Activated naive CD4-positive, alpha-beta T cell treated with anti-CD3 and anti-CD28 coated beads for 36 hours (primary cell): ENCODE measurements at regions of chr2 and their contacts with region 1.

Region 1: DNA sequence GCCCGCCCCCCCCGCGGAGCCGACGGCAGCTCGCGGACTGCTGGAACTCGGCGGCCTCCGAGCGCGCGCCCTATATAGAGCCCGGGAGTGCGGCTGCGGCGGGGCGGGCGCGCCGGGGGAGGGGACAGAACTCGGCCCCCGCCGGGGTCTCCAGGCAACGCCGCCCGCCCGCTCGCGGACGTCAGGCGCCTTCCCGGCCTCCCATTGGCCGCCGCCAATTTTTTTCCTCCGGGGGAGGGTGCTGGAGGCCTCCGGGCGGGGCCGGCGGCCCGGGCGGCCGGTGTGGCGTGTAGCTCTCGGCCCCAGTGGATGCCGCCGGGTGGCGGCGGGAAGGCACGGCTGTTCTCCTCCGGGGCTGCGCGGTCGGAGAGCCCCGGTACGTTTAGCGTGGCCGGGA is at the start of gene ZFP36L2:
- DNase-seq: peak; percentile 95
- H3K4me3 Mint-ChIP-seq: peak within 1 kb of the TSS; percentile 97
- H3K27ac Mint-ChIP-seq: peak within 1 kb of the TSS; percentile 92
- H3K4me1 Mint-ChIP-seq: peaks cover 36% of the 10 kb centered on the region
- H3K27me3 Mint-ChIP-seq: no peaks in the 10 kb centered on the region
- total RNA-seq, gene ZFP36L2: 37.3 to 38.4 TPM

Region 2: GRCh38 chr2:41337956-41338355 is 1888.6 kb before region 1 on chr2:
- CTCF ChIA-PET with region 1: no interaction called
- intact Hi-C with region 1: no loop called
- DNase-seq: no peak
- H3K4me3 Mint-ChIP-seq: no peak overlapping the region
- H3K27ac Mint-ChIP-seq: no peak overlapping the region
- H3K4me1 Mint-ChIP-seq: no peaks in the 10 kb centered on the region
- H3K27me3 Mint-ChIP-seq: no peaks in the 10 kb centered on the region

Region 3: GRCh38 chr2:42828487-42829425 is 397.8 kb before region 1 on chr2:
- CTCF ChIA-PET with region 1: interaction called, 17 read pairs
- intact Hi-C with region 1: loop called (anchors 1 kb)
- DNase-seq: peak; percentile 78
- H3K4me3 Mint-ChIP-seq: no peak overlapping the region
- H3K27ac Mint-ChIP-seq: no peak overlapping the region
- H3K4me1 Mint-ChIP-seq: peaks cover 16% of the 10 kb centered on the region
- H3K27me3 Mint-ChIP-seq: no peaks in the 10 kb centered on the region

Region 4: GRCh38 chr2:42974721-42975717 is 251.5 kb before region 1 on chr2:
- CTCF ChIA-PET with region 1: interaction called, 73 read pairs
- intact Hi-C with region 1: loop called (anchors 1 kb)
- DNase-seq: peak; percentile 69
- H3K4me3 Mint-ChIP-seq: no peak overlapping the region
- H3K27ac Mint-ChIP-seq: no peak overlapping the region
- H3K4me1 Mint-ChIP-seq: peaks cover 13% of the 10 kb centered on the region
- H3K27me3 Mint-ChIP-seq: no peaks in the 10 kb centered on the region

Region 5: GRCh38 chr2:43131024-43131889 is 95.3 kb before region 1 on chr2:
- CTCF ChIA-PET with region 1: interaction called, 505 read pairs
- intact Hi-C with region 1: loop called (anchors 1 kb)
- DNase-seq: peak; percentile 94
- H3K4me3 Mint-ChIP-seq: peak overlapping the region; percentile 20
- H3K27ac Mint-ChIP-seq: peak overlapping the region; percentile 18
- H3K4me1 Mint-ChIP-seq: peaks cover 87% of the 10 kb centered on the region
- H3K27me3 Mint-ChIP-seq: no peaks in the 10 kb centered on the region

Region 6: GRCh38 chr2:43169987-43170386 is 56.6 kb before region 1 on chr2:
- CTCF ChIA-PET with region 1: interaction called, 128 read pairs
- intact Hi-C with region 1: loop called (anchors 1 kb)
- DNase-seq: peak; percentile 89
- H3K4me3 Mint-ChIP-seq: peak overlapping the region; percentile 42
- H3K27ac Mint-ChIP-seq: peak overlapping the region; percentile 61
- H3K4me1 Mint-ChIP-seq: peaks cover 81% of the 10 kb centered on the region
- H3K27me3 Mint-ChIP-seq: no peaks in the 10 kb centered on the region

Region 7: DNA sequence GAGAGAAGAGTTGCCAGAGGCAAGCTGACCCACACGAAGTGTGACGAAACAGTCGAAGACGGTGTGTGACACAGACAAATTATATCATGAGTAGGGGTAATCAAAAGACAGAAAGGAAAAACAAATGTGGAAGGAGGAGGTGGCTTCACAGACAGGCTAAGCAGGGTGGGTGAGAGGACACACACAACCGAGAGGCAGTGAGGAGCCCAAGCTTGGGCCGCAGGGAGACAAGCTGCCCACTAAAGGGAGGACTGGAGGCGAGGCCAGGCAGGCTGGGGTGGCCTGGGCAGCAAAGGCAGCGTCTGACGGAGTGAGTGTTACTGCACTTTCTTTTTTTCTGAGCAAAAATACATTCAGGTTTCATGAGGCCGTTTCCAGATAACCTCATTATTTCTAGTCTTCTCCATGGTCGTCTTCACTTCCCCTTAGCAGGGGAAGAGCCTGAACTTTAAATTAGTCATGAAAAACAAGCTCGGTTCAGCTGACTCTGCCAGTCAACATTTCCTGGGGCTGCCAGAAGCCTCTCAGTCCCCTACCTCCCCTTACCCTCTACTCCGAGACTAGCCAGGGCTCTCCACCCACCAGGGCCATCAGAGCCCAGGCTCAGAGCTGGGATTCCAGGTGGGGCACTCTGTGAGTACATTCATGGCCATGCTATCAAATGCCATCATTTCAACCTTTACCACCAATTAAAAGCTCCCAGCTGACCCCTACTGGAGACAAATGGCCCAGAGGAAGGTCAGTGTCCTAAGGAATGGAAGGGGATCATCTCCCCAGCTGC is 13.6 kb after region 1 on chr2:
- CTCF ChIA-PET with region 1: interaction called, 11 read pairs
- intact Hi-C with region 1: no loop called
- DNase-seq: no peak
- H3K4me3 Mint-ChIP-seq: no peak overlapping the region
- H3K27ac Mint-ChIP-seq: no peak overlapping the region
- H3K4me1 Mint-ChIP-seq: peaks cover 8% of the 10 kb centered on the region
- H3K27me3 Mint-ChIP-seq: no peaks in the 10 kb centered on the region